ENCODE measurements at regions of chr9 and their contacts with region 1.

Region 1: DNA sequence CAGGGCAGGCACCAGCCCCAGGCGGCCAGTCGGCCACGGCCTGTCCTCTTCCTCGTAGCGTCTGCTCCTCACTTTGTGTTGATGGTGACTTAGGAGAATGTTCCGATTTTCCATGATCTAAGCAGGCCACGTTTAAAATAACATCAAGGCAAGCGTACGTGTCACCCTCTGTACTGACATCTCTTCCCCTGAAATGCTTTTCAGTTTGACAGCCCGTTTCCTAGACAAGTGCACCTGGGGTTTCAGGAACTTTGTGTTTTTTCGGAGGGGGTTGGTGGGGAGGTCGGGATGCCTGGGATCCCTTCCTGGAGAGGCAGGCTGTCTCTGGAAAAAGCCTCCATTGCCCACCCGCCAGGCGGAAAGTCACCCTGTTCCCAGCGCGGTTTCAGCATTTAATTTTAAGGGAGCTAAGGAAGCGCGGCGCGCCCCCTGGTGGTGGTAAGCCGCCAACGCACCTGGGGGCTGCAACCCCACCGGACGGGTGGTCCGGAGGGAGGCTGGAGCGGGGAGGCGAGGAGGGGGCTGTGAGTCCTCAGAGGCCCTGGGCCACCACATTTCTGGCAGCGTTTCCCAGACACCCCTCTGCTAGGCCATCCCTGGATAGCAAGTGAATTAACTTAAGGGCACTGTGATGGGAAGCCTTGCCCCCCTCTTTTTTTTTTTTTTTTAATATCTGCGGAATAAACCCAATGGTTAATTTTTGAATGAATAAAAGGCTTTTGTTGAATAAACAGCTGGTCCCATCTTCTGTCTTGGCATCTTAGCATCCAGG is 29.5 kb upstream of the HMCN2 start:
- DNase-seq: peak; percentile 45 to 86
- H3K4me3 ChIP-seq: peak overlapping the region; percentile 12 to 23
- H3K27ac ChIP-seq: peak overlapping the region; percentile 17 to 66
- H3K4me1 ChIP-seq: peaks cover 0 to 19% (median 12%) of the 10 kb centered on the region in 4 donors
- H3K27me3 ChIP-seq: no peaks in the 10 kb centered on the region
- CTCF ChIP-seq: peak; percentile 99

Region 2: GRCh38 chr9:130107234-130107861 is 128.7 kb before region 1 on chr9:
- intact Hi-C with region 1: loop called (anchors 2 kb)
- DNase-seq: peak; percentile 86 to 93
- H3K4me3 ChIP-seq: no peak overlapping the region
- H3K27ac ChIP-seq: no peak overlapping the region
- H3K4me1 ChIP-seq: no peaks in the 10 kb centered on the region
- H3K27me3 ChIP-seq: no peaks in the 10 kb centered on the region
- CTCF ChIP-seq: peak; percentile 71 to 84

Region 3: DNA sequence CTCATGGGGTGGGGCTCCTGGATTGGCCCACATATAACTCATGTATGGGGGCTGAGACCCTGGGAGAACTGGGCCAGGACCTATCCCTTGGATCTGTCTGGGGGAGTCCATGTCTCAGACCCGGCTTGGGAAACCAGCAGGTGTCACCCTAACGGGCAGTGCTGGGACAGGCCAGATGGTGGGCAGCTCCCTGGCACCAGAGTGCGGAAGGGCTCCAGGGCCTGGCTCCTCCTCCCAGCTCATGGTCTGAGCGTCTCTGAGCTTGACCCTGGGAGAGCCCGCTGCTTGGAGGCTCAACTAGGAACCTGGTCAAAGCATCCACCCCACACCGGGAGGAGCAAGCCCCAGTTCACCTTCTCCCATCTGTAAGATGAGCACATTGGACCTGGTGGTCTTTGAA is 79.4 kb before region 1 on chr9:
- intact Hi-C with region 1: loop called (anchors 5 kb)
- DNase-seq: peak; percentile 50 to 86
- H3K4me3 ChIP-seq: no peak overlapping the region
- H3K27ac ChIP-seq: peak overlapping the region in 1 of 2 donors; percentile 4
- H3K4me1 ChIP-seq: peaks cover 0 to 9% (median 2%) of the 10 kb centered on the region in 4 donors
- H3K27me3 ChIP-seq: no peaks in the 10 kb centered on the region
- CTCF ChIP-seq: peak; percentile 52 to 57

Region 4: DNA sequence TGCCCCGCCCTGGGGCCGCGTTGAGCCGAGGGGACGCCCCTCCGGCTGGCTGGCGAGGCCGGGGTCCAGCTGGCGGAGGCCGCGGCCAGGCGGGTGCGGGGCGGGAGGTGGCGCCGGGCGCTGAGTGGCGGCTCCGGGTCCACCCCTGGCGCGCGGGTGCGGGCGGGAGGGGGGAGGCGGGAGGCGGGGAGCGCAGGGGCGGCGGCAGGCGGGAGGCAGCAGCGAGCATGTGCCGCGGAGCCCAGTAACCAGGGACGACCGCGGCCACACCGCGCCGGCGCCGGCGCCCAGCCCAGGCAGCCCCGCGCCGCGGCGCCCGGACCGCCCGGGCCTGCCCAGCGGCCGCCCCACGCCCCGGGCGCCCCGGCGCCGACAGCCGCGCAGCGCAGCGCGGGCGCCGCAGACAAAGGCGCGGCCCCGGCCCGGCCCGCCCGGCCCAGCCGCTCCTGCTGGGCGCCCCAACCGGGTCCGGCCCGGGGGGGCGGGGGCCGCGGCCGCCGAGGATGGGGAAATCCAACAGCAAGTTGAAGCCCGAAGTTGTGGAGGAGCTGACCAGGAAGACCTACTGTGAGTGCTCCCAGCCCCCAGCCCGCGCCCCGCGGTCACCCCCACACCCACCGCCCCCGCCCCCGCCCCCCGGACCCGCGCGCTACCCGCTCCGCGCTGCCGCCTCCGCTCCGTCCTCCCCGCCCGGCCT is 63.8 kb before region 1 on chr9 and contains the start of gene NCS1:
- intact Hi-C with region 1: loop called (anchors 5 kb)
- DNase-seq: peak; percentile 71 to 91
- H3K4me3 ChIP-seq: peak within 1 kb of the TSS; percentile 65 to 94
- H3K27ac ChIP-seq: peak within 1 kb of the TSS; percentile 90 to 95
- H3K4me1 ChIP-seq: peaks cover 0 to 49% (median 39%) of the 10 kb centered on the region in 4 donors
- H3K27me3 ChIP-seq: no peaks in the 10 kb centered on the region
- CTCF ChIP-seq: no peak